SK-N-SH (cell line): ENCODE measurements at regions of chr17 and their contacts with region 1.

Region 1: GRCh38 chr17:30093463-30094147 is 23.0 kb upstream of the NSRP1 start:
- DNase-seq: peak; percentile 76
- H3K4me3 ChIP-seq: peak overlapping the region in 1 of 2 experiments; percentile 30; a peak in 1 of 4 replicates
- H3K27ac ChIP-seq: no peak overlapping the region
- H3K4me1 ChIP-seq: peaks cover 0 to 31% of the 10 kb centered on the region in 2 experiments; a peak in 2 of 4 replicates
- H3K27me3 ChIP-seq: no peaks in the 10 kb centered on the region
- CTCF ChIP-seq: peak; percentile 85
- EP300 ChIP-seq: no peak
- RAD21 ChIP-seq: peak; percentile 94

Region 2: DNA sequence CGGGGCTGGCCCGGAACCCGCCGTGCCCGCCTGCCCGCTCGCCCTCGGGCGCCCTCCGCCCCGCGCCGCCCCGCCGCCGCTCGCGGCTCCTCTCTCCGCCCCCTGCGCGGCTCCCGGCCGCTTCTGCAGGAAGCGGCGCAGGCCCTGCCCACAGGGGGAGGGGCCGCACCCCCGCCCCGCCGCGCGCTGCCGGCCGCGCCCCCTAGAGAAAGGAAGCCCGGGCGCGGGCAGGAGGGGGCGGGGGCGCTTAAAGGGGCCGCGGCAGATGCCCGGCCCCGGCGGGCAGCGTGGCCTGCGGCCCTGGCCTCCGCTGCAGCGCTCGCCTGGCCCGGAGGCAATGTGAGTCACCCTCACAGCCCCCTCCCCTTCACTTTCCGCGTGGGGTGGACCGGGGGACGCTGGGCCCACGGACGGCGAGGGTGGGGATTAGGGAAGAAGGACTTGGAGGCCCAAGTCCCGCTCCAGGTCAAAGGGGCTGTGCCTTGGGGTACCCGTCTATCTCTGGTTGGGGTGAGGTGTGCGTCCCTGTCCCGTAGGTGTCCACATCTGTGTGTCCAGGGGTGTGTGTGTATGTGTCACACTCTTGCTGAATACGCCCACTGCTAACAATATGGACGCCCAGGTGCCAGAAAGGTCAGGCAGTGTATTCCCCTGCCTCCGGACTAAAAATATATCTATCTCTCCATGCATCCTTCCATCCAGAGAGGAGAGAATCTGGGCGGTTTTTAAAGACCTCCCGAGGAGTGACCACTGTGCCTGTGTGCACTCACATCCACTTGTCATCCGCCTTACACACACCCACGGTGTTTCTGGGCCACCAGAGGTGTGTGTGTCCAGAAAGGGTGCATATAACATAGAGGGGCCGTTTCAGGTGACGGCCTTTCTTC is 503.8 kb before region 1 on chr17 and contains the start of gene GIT1:
- CTCF ChIA-PET with region 1: interaction called, 11 read pairs
- POLR2A ChIA-PET with region 1: no interaction called
- DNase-seq: peak; percentile 98
- H3K4me3 ChIP-seq: peak within 1 kb of the TSS; percentile 89 to 91
- H3K27ac ChIP-seq: peak within 1 kb of the TSS; percentile 64 to 91
- H3K4me1 ChIP-seq: peaks cover 41 to 65% of the 10 kb centered on the region in 2 experiments
- H3K27me3 ChIP-seq: no peaks in the 10 kb centered on the region
- CTCF ChIP-seq: no peak
- EP300 ChIP-seq: no peak
- RAD21 ChIP-seq: no peak
- polyA plus RNA-seq, gene GIT1: 39.4 and 42.9 TPM in 2 replicates

Region 3: DNA sequence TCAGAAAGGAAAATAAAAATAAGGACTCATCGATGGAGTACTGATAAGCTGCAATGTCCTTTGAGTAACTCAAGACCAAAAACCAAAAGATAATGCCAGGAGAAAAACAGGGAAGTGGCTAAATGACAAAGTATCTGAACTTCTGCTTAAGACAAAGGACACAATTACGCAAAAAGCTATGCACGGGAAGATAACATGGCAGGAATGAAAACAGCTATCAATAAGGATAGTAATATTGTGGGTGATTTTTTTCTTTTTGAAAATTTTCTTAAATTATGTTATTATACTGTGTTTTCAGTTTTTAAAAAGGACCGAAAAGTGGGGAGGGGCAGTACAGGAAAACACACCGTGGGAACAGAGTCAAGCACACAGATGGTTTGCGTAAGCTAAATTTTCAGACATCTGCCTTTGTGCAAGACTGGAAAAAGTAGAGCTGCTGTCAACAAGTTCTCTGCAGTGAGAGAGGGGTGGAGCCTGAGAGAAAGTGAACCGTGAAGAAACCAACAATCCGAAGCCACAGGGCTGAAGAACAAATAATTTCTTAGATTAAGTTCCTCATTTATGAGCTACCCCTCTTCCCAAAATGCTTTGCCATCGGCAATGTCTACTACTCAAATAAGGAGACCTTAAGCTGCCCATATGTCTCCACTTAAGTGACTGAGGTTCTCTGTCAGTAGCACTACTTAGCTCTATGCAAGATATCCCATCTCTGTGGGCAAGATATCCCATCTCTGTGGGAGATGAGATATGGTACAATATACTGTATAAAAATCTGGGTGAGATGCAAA is 371.0 kb before region 1 on chr17:
- CTCF ChIA-PET with region 1: no interaction called
- POLR2A ChIA-PET with region 1: no interaction called
- DNase-seq: peak; percentile 39
- H3K4me3 ChIP-seq: no peak overlapping the region
- H3K27ac ChIP-seq: peak overlapping the region; percentile 28 to 95; a peak in 3 of 4 replicates
- H3K4me1 ChIP-seq: peaks cover 33 to 54% of the 10 kb centered on the region in 2 experiments
- H3K27me3 ChIP-seq: no peaks in the 10 kb centered on the region
- CTCF ChIP-seq: no peak
- EP300 ChIP-seq: no peak
- RAD21 ChIP-seq: no peak

Region 4: GRCh38 chr17:29777663-29778062 is 315.9 kb before region 1 on chr17:
- CTCF ChIA-PET with region 1: interaction called, 12 read pairs
- POLR2A ChIA-PET with region 1: no interaction called
- DNase-seq: no peak
- H3K4me3 ChIP-seq: no peak overlapping the region
- H3K27ac ChIP-seq: peak overlapping the region in 1 of 2 experiments; percentile 29; a peak in 1 of 4 replicates
- H3K4me1 ChIP-seq: peaks cover 0 to 11% of the 10 kb centered on the region in 2 experiments; a peak in 2 of 4 replicates
- H3K27me3 ChIP-seq: no peaks in the 10 kb centered on the region
- CTCF ChIP-seq: no peak
- EP300 ChIP-seq: no peak
- RAD21 ChIP-seq: no peak

Region 5: DNA sequence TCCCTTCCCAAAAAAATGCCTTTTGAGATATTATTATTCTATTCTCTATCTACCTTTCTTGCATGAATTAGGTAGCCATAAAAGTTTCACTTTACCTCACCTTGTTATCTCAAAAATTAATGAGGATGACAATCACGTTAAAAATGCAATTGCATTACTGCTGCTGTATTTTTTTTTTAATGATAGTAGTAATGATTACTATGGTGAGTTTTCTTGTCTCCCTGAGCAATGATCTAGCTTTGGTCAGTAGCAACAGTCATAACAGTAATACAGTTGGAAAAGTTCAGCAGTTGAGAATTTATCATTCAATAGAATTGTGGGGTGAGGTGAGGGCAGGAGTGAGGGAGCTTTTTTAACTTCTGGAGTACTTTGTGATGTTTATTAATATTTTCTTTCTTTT is 152.3 kb before region 1 on chr17 and contains the start of gene EFCAB5:
- CTCF ChIA-PET with region 1: interaction called, 12 read pairs
- POLR2A ChIA-PET with region 1: no interaction called
- DNase-seq: no peak
- H3K4me3 ChIP-seq: no peak within 1 kb of the TSS
- H3K27ac ChIP-seq: no peak within 1 kb of the TSS
- H3K4me1 ChIP-seq: no peaks in the 10 kb centered on the region
- H3K27me3 ChIP-seq: no peaks in the 10 kb centered on the region
- CTCF ChIP-seq: no peak
- EP300 ChIP-seq: no peak
- RAD21 ChIP-seq: no peak
- polyA plus RNA-seq, gene EFCAB5: 0.05 TPM in 1 of 2 replicates, not detected in the other

Region 6: DNA sequence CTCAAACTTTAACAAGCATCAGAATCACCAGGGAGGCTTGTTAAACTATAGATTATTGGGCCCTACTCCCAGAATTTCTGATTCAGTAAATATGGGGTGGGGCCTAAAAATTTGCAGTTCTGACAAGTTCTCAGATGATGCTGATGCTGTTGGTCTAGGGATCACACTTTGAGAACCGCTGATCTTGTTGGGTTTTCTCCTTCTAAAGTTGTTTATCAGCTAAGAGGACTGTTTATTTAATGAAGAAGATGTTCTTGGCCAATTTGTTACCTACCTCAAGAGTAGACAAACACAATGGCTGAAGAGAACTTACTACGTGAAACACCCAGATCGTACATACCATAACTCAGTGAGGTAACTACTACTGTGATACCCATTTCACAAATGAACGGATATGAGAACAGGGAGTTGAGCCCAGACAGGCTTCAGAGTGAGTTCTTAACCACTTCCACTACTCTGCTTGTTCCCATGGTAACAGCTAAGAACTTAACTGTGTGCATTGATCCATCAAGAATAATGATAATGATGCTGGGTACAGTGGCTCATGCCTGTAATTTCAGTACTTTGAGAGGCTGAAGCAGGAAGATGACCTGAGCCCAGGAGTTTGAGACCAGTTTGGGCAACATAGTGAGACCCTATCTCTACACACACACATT is 62.3 kb before region 1 on chr17:
- CTCF ChIA-PET with region 1: interaction called, 58 read pairs
- POLR2A ChIA-PET with region 1: no interaction called
- DNase-seq: no peak
- H3K4me3 ChIP-seq: no peak overlapping the region
- H3K27ac ChIP-seq: no peak overlapping the region
- H3K4me1 ChIP-seq: no peaks in the 10 kb centered on the region; a peak in 1 of 4 replicates
- H3K27me3 ChIP-seq: no peaks in the 10 kb centered on the region
- CTCF ChIP-seq: no peak
- EP300 ChIP-seq: no peak
- RAD21 ChIP-seq: no peak

Region 7: DNA sequence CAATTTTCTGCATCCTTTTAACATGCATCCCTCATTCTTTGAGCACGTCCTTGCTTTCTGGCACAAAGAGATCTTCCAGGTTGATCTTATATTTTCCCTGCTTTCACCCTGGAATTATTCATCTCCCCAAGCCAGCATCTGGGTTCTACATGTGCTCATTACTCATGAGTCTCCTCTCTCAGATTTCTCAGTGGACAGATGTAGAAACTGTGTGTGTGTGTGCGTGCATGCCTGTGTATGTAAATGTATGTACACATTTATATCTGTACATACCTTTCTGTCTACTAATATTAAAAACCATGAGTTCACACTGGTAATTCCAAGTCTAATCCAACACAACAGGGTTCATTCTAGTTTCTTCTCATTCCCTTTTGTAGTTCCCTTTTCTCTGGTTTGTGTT is 18.9 kb before region 1 on chr17:
- CTCF ChIA-PET with region 1: interaction called, 81 read pairs
- POLR2A ChIA-PET with region 1: no interaction called
- DNase-seq: no peak
- H3K4me3 ChIP-seq: no peak overlapping the region
- H3K27ac ChIP-seq: no peak overlapping the region
- H3K4me1 ChIP-seq: no peaks in the 10 kb centered on the region
- H3K27me3 ChIP-seq: no peaks in the 10 kb centered on the region
- CTCF ChIP-seq: no peak
- EP300 ChIP-seq: no peak
- RAD21 ChIP-seq: no peak

Region 8: DNA sequence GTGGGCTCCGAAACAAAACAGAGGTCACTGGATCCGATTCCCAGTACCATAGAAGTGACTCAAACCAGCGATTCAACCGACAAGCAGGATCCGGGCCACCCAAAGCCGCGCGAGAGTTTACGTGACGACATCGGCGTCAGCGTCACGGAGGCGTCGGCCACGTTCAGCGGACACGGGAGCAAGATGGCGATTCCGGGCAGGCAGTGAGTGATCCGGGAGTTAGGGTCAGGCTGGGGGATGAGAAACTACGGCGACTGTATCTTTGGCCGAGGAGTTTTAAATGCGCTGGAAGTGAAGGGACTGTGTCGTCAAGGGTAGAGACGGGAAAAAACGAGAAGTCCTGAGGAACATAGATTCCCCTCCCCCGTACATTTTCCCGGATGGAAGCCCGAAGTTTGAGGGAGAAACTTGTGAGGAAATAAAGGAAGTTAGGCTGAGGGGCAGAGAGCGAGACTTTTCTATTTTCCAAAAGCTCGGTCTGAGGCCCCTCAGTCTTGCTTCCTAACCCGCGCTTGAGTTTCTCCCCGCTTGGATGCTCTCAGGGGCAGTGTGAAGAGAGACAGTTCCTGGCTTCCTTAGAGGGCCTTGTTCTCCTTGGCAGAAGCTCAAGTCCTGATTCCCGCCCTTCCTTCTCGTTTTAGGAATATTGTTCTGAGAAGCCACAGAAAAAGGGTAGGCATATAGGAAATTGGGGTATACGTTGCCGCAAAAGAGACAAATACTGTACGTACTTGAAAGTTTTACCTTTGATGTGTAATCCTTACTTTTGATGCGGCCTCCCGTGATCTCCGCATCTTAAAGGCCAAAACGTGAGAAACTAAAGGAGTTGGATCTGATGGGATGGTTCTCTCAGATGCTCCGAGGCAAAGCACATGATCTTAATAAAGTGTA is 23.3 kb after region 1 on chr17 and contains the start of gene NSRP1:
- CTCF ChIA-PET with region 1: interaction called, 18 read pairs
- POLR2A ChIA-PET with region 1: no interaction called
- DNase-seq: peak; percentile 87
- H3K4me3 ChIP-seq: peak within 1 kb of the TSS; percentile 76 to 82
- H3K27ac ChIP-seq: peak within 1 kb of the TSS; percentile 95
- H3K4me1 ChIP-seq: peaks cover 3 to 9% of the 10 kb centered on the region in 2 experiments; a peak in 2 of 4 replicates
- H3K27me3 ChIP-seq: no peaks in the 10 kb centered on the region
- CTCF ChIP-seq: no peak
- EP300 ChIP-seq: no peak
- RAD21 ChIP-seq: no peak
- polyA plus RNA-seq, gene NSRP1: 9.6 and 10.8 TPM in 2 replicates

Region 9: DNA sequence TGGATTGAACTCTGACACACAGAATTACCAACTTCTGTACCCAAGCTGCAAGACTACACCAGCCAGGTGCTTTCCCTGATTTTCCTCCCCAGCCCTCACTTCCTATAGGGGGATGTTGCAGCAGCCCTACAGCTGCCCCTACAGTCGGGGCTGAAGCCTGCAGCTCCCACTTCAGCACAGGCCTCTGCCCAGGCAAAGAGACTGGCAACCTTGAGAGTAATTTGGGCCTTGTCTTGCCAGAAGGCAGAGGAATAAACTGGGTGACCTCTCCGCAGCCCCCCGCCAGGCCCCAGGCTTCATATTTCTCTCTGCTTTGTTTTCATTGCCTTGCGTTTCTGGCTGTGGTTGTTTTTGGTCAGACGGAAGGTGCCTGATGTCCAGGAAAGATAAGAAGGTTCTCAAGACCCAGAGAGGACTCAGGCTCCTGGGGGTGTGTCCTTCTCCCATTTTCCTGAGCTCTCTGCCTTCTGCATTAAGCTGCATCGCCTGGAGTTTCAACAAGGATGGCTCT is 109.9 kb after region 1 on chr17:
- CTCF ChIA-PET with region 1: no interaction called
- POLR2A ChIA-PET with region 1: no interaction called
- DNase-seq: peak; percentile 1
- H3K4me3 ChIP-seq: no peak overlapping the region
- H3K27ac ChIP-seq: no peak overlapping the region
- H3K4me1 ChIP-seq: peaks cover 0 to 4% of the 10 kb centered on the region in 2 experiments; a peak in 1 of 4 replicates
- H3K27me3 ChIP-seq: no peaks in the 10 kb centered on the region
- CTCF ChIP-seq: no peak
- EP300 ChIP-seq: no peak
- RAD21 ChIP-seq: no peak